Left lung (tissue), 14 donors: ENCODE measurements at regions of chr1 and their contacts with region 1.

Region 1: GRCh38 chr1:185663332-185663731 is 70.9 kb upstream of the HMCN1 start:
- DNase-seq: no peak
- ATAC-seq: no peak
- H3K4me3 ChIP-seq: no peak overlapping the region
- H3K27ac ChIP-seq: no peak overlapping the region
- H3K4me1 ChIP-seq: no peaks in the 10 kb centered on the region
- H3K27me3 ChIP-seq: no peaks in the 10 kb centered on the region
- CTCF ChIP-seq: no peak

Region 2: DNA sequence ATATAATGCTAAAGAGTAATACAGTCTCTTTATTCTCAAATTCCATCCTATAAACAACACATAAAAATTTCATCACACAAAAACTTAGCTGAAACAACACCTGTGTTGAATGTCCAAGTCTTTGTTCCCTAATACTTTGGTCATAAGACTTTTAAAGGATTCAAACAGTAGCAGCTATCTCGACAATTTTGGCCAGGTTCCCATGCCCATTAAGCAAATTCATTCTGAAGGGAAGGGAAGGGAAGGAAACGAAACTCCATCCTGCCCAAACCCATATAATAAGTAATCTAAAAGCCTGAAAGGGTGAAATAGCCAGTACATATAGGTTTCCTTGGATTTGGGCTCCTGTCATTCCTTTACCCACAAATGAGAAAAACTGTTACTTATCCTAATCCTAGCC is 353.8 kb before region 1 on chr1:
- intact Hi-C with region 1: loop called in 1 of 2 experiments (anchors 10 kb)
- DNase-seq: no peak
- ATAC-seq: no peak
- H3K4me3 ChIP-seq: no peak overlapping the region
- H3K27ac ChIP-seq: no peak overlapping the region
- H3K4me1 ChIP-seq: peaks cover 11 to 53% of the 10 kb centered on the region in 2 donors
- H3K27me3 ChIP-seq: no peaks in the 10 kb centered on the region
- CTCF ChIP-seq: no peak

Region 3: DNA sequence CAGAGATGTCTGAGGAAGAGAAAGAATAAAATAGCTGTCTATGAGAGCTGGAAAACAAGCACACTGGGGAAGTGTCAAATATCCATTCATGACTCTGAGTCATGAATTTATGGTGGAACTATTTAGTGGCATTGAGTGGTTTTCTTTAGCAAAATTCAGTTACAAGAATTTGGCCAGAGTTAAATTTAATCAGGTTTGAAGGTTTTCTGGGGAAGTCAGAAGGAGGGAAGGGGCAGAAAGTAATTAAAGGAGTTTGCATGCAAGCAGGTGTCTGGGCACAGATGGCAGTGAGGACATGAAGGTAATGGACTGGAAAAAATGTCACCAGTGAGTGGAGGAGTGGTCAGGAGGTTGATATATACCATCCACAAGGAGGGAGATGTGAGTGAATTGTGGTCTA is 224.4 kb before region 1 on chr1:
- intact Hi-C with region 1: no loop called
- DNase-seq: no peak
- ATAC-seq: no peak
- H3K4me3 ChIP-seq: no peak overlapping the region
- H3K27ac ChIP-seq: peak overlapping the region; percentile 67 to 86
- H3K4me1 ChIP-seq: peaks cover 4 to 26% of the 10 kb centered on the region in 2 donors
- H3K27me3 ChIP-seq: no peaks in the 10 kb centered on the region
- CTCF ChIP-seq: no peak